PC-9 (cell line): ENCODE measurements at regions of chr15 and their contacts with region 1.

Region 1: DNA sequence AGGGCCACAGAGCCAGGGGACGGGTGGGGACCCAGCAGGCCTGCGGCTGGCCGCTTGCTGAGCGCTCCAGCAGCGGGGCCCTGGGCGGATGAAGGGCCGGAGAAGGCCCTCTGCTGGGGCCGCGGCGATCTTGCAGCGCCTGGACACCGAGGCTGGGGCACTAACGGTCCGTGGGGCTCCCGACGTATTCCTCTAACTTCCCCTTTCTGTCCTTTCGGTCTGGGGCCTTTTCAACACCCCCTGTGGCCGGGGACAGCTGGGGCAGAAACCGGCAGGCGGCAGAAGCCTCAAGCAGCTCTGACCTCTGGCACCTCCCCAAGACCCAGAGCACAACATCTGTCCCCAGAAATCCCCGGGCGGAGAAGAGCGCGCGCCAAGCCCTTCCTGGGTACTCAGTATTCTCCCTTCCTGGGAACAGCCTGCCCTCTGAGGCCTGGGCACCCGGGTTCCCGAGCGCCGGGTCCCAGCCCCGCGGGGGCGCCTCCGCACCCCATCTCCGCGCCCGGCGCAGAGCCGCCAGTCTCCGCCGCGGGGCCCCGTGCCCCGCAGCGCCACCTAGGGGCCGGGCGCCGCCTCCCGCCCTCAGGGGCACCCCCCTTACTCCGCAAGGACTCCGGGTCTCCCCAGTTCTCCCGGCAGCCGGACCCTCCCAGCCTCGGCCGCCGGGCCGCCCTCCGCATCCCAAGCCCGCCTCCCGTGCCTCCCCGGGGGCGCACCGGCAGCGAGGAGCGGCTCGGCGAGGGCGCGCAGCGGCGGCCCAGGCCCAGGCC is 582 bp upstream of the SLCO3A1 start:
- DNase-seq: peak; percentile 46 to 74
- H3K4me3 ChIP-seq: peak overlapping the region; percentile 86
- H3K27ac ChIP-seq: peak overlapping the region; percentile 74
- H3K4me1 ChIP-seq: peaks cover 44% of the 10 kb centered on the region
- H3K27me3 ChIP-seq: no peaks in the 10 kb centered on the region
- CTCF ChIP-seq: peak; percentile 72

Region 2: GRCh38 chr15:90165659-90166421 is 1687.1 kb before region 1 on chr15:
- CTCF ChIA-PET with region 1: no interaction called
- POLR2A ChIA-PET with region 1: interaction called, 13 read pairs
- intact Hi-C with region 1: no loop called
- DNase-seq: peak; percentile 96 to 99
- H3K4me3 ChIP-seq: peak overlapping the region; percentile 14; the same call in 1 of the 2 replicates
- H3K27ac ChIP-seq: peak overlapping the region; percentile 94
- H3K4me1 ChIP-seq: peaks cover 76% of the 10 kb centered on the region
- H3K27me3 ChIP-seq: no peaks in the 10 kb centered on the region
- CTCF ChIP-seq: no peak

Region 3: GRCh38 chr15:91302588-91303439 is 550.1 kb before region 1 on chr15:
- CTCF ChIA-PET with region 1: no interaction called
- POLR2A ChIA-PET with region 1: no interaction called
- intact Hi-C with region 1: loop called (anchors 1 kb)
- DNase-seq: peak; percentile 29 to 61
- H3K4me3 ChIP-seq: no peak overlapping the region
- H3K27ac ChIP-seq: no peak overlapping the region
- H3K4me1 ChIP-seq: 0 out of 2 replicates have a peak, but pooled peaks cover 4% of the 10 kb centered on the region
- H3K27me3 ChIP-seq: no peaks in the 10 kb centered on the region
- CTCF ChIP-seq: peak; percentile 86

Region 4: GRCh38 chr15:91801836-91802534 is 50.9 kb before region 1 on chr15:
- CTCF ChIA-PET with region 1: no interaction called
- POLR2A ChIA-PET with region 1: no interaction called
- intact Hi-C with region 1: no loop called
- DNase-seq: peak; percentile 11 to 42
- H3K4me3 ChIP-seq: no peak overlapping the region
- H3K27ac ChIP-seq: no peak overlapping the region
- H3K4me1 ChIP-seq: no peaks in the 10 kb centered on the region
- H3K27me3 ChIP-seq: no peaks in the 10 kb centered on the region
- CTCF ChIP-seq: no peak

Region 5: GRCh38 chr15:91839867-91840266 is 13.1 kb before region 1 on chr15:
- CTCF ChIA-PET with region 1: no interaction called
- POLR2A ChIA-PET with region 1: no interaction called
- intact Hi-C with region 1: no loop called
- DNase-seq: no peak
- H3K4me3 ChIP-seq: no peak overlapping the region
- H3K27ac ChIP-seq: no peak overlapping the region
- H3K4me1 ChIP-seq: no peaks in the 10 kb centered on the region
- H3K27me3 ChIP-seq: no peaks in the 10 kb centered on the region
- CTCF ChIP-seq: no peak

Region 6: DNA sequence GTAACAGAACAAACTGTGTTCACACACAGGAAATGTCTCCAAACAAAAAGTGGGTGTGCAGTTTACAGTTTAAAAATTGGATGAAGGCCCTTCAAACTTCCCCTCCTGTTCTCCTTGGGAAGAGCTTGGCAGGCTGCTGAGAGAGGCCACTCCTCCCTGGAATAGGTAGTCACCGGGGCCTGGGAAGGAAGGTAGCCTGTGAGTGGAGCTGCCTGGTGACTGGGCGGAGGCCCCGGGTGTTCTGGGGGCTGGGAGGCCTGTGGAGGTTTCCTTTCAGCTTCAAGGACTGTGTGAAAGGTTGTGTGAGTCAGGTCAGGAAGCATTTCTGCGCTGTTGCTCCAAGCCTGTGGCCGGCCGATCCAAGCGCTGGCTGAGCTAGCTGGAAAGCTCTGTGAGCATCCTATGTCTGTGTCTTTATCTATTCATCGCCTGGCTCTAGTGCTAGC is 14.7 kb after region 1 on chr15:
- CTCF ChIA-PET with region 1: interaction called, 6 read pairs
- POLR2A ChIA-PET with region 1: interaction called, 12 read pairs
- intact Hi-C with region 1: loop called (anchors 1 kb)
- DNase-seq: peak; percentile 93 to 95
- H3K4me3 ChIP-seq: peak overlapping the region; percentile 43; the same call in 1 of the 2 replicates
- H3K27ac ChIP-seq: peak overlapping the region; percentile 95
- H3K4me1 ChIP-seq: peaks cover 57% of the 10 kb centered on the region
- H3K27me3 ChIP-seq: no peaks in the 10 kb centered on the region
- CTCF ChIP-seq: no peak

Region 7: GRCh38 chr15:91965501-91966184 is 112.7 kb after region 1 on chr15:
- CTCF ChIA-PET with region 1: no interaction called
- POLR2A ChIA-PET with region 1: no interaction called
- intact Hi-C with region 1: loop called (anchors 10 kb)
- DNase-seq: peak; percentile 89 to 98
- H3K4me3 ChIP-seq: peak overlapping the region; percentile 24; the same call in 1 of the 2 replicates
- H3K27ac ChIP-seq: peak overlapping the region; percentile 98
- H3K4me1 ChIP-seq: peaks cover 50% of the 10 kb centered on the region
- H3K27me3 ChIP-seq: no peaks in the 10 kb centered on the region
- CTCF ChIP-seq: no peak

Region 8: DNA sequence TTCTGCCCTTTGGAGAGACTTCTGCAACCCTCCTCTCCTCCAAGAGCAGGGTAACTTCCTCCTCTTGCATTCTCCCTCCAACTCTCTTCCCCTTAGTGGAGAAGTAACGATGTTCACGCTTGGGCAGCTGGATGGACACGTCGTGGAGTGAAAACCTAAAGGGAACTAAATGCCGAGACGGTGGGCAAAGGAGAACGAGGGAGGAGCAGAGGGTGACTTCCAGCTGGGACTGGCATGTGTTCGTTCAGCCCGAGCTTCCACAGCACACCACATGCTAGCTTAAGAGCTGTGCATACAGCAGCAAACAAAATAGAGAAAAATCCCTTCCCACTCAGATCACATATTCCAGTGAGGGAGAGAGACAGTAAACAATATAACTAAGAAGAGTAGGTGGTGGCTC is 180.4 kb after region 1 on chr15:
- CTCF ChIA-PET with region 1: no interaction called
- POLR2A ChIA-PET with region 1: no interaction called
- intact Hi-C with region 1: no loop called
- DNase-seq: no peak
- H3K4me3 ChIP-seq: no peak overlapping the region
- H3K27ac ChIP-seq: no peak overlapping the region
- H3K4me1 ChIP-seq: no peaks in the 10 kb centered on the region
- H3K27me3 ChIP-seq: no peaks in the 10 kb centered on the region
- CTCF ChIP-seq: no peak